PC-3 (cell line): ENCODE measurements at regions of chr19 and their contacts with region 1.

Region 1: DNA sequence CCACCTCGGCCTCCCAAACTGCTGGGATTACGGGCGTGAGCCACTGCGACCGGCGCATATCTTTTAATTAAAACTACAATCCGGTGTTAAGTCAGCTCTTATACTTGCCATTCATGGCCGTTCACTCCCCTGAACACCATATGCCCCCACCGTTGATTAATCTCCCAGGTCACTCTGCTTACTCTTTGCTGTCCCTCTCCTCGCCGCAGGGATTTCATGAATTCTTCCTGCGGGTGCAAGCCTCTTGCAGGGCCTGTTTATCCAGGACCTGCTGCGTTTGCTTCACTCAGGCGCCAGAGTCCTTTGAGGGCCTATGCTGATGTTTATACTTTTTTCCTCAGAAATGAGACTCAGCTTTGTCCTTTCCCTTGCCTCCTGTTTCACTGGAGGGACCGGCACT is 1.0 kb downstream of the ERVV-2 start:
- DNase-seq: no peak
- ATAC-seq: no peak
- H3K4me3 ChIP-seq: no peak overlapping the region
- H3K27ac ChIP-seq: no peak overlapping the region
- H3K4me1 ChIP-seq: no peaks in the 10 kb centered on the region
- H3K27me3 ChIP-seq: no peaks in the 10 kb centered on the region
- CTCF ChIP-seq: no peak

Region 2: GRCh38 chr19:53057904-53058580 is 12.5 kb after region 1 on chr19:
- CTCF ChIA-PET with region 1: no interaction called
- POLR2A ChIA-PET with region 1: interaction called, 23 read pairs
- intact Hi-C with region 1: no loop called
- DNase-seq: peak; percentile 30
- ATAC-seq: peak; percentile 65
- H3K4me3 ChIP-seq: peak overlapping the region; percentile 37
- H3K27ac ChIP-seq: no peak overlapping the region
- H3K4me1 ChIP-seq: no peaks in the 10 kb centered on the region
- H3K27me3 ChIP-seq: no peaks in the 10 kb centered on the region
- CTCF ChIP-seq: no peak